PC-3 (cell line): ENCODE measurements at regions of chr17 and their contacts with region 1.

Region 1: GRCh38 chr17:12020642-12021622 is at the start of gene MAP2K4:
- DNase-seq: peak; percentile 93
- ATAC-seq: peak; percentile 88
- H3K4me3 ChIP-seq: peak within 1 kb of the TSS; percentile 83
- H3K27ac ChIP-seq: no peak within 1 kb of the TSS
- H3K4me1 ChIP-seq: peaks cover 45% of the 10 kb centered on the region
- H3K27me3 ChIP-seq: no peaks in the 10 kb centered on the region
- CTCF ChIP-seq: no peak
- total RNA-seq, gene MAP2K4: 33.9 and 35.5 TPM in 2 replicates

Region 2: DNA sequence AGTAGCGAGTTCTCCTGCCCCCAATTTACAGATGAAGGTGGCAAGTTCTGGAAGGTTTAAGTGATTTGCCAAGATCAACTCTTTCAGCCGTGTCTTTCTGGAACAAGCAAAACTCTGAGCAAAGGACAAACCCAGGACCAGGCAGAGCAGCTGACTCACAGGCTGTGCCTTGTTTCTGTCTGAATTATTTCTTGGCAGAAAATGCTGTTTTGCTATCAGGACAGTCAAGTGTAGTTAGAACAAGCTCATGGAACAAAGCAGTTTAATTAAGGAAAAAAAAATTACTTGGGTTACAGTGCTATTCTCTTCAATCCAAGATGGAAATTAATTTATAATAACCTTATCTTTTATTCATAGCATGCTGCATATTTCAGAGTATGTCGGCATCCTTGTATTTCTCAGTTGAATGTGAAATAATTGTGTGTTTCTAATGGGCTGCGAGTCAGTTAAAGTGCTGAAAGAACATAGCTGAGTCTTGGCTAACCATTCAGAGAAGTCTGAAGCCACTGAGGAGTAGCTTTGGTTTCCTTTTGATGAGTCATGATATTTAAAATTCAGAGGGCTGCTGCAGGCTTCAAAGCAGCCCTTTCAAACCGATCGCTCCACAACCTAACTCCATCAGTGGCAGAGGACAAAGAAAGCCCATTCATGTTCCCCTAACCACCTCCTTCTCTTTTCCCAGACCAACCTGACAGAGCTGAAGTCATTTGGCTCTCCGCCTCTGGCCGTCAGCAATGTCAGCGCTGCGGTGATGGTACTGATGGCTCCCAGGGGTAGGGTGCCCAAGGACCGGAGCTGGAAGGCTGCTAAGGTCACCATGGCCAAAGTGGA is 167.4 kb before region 1 on chr17:
- CTCF ChIA-PET with region 1: no interaction called
- POLR2A ChIA-PET with region 1: no interaction called
- intact Hi-C with region 1: no loop called
- DNase-seq: no peak
- ATAC-seq: no peak
- H3K4me3 ChIP-seq: no peak overlapping the region
- H3K27ac ChIP-seq: no peak overlapping the region
- H3K4me1 ChIP-seq: no peaks in the 10 kb centered on the region
- H3K27me3 ChIP-seq: no peaks in the 10 kb centered on the region
- CTCF ChIP-seq: no peak

Region 3: DNA sequence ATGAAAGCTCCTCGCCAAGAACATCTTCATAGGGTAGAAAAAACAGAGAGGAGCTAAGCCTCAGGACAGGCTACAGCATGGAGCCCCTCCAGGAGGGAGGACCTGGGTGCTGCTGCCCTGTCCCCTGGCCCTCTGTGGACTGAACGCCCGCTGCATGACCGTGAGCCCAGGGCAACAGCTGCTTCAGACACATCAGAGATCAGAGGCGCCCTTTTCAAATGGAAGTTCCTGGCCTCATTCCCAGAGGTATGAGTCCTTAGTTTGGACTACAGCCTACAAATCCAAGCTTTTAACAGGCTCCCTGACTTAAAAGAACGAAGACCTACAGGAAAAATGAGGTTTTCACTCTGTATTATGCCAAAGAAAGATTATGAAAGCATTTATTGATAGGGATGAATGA is 72.1 kb before region 1 on chr17:
- CTCF ChIA-PET with region 1: no interaction called
- POLR2A ChIA-PET with region 1: no interaction called
- intact Hi-C with region 1: loop called (anchors 2 kb)
- DNase-seq: peak; percentile 94
- ATAC-seq: peak; percentile 83
- H3K4me3 ChIP-seq: peak overlapping the region; percentile 48
- H3K27ac ChIP-seq: no peak overlapping the region
- H3K4me1 ChIP-seq: peaks cover 26% of the 10 kb centered on the region
- H3K27me3 ChIP-seq: no peaks in the 10 kb centered on the region
- CTCF ChIP-seq: no peak

Region 4: DNA sequence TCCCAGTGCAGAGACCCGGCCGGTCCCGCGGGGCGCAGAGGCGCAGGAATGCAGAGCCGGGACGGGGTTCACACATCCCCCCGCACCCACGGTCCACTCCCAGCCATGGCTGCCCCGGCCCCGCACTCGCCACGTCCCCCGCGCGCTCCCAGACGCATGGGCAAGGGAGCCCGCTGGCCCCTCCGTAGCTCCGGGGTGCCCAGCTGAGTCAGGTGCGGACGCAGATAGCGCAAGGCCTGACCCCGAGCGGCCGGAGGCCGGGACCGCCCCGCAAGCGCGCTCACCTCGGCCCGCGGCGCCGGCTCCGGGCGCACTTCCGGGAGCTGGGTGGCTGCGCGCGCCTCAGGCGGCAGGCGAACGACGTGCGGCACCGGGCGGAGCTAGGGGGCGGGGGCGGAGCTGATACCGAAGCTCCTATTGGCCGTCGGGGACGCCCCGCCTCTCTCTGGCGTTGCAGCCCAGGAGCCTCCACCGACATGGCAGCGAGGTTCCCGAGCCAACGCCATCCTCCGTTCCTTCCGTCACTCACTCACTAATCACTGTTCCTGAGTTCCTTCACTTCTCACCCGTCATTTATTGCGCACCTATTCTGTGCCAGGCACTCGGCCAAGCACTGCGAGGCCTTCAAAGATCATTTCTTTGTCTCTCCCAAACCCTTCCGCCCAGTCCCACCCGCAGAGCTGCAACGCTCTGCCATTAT is 23.6 kb before region 1 on chr17 and contains the start of gene ZNF18:
- CTCF ChIA-PET with region 1: interaction called, 3 read pairs
- POLR2A ChIA-PET with region 1: interaction called, 23 read pairs
- intact Hi-C with region 1: no loop called
- DNase-seq: peak; percentile 98
- ATAC-seq: peak; percentile 95
- H3K4me3 ChIP-seq: peak within 1 kb of the TSS; percentile 96
- H3K27ac ChIP-seq: peak within 1 kb of the TSS; percentile 43
- H3K4me1 ChIP-seq: peaks cover 12% of the 10 kb centered on the region
- H3K27me3 ChIP-seq: no peaks in the 10 kb centered on the region
- CTCF ChIP-seq: no peak
- total RNA-seq, gene ZNF18: 7.4 and 10.1 TPM in 2 replicates